HEK293 (cell line): ENCODE measurements at regions of chr6 and their contacts with region 1.

Region 1: GRCh38 chr6:37324131-37325033 is 29.4 kb upstream of the RNF8 start:
- H3K4me3 ChIP-seq: no peak overlapping the region
- H3K27ac ChIP-seq: no peak overlapping the region
- H3K4me1 ChIP-seq: peaks cover 3% of the 10 kb centered on the region; the same call in 1 of the 2 replicates
- CTCF ChIP-seq: no peak

Region 2: DNA sequence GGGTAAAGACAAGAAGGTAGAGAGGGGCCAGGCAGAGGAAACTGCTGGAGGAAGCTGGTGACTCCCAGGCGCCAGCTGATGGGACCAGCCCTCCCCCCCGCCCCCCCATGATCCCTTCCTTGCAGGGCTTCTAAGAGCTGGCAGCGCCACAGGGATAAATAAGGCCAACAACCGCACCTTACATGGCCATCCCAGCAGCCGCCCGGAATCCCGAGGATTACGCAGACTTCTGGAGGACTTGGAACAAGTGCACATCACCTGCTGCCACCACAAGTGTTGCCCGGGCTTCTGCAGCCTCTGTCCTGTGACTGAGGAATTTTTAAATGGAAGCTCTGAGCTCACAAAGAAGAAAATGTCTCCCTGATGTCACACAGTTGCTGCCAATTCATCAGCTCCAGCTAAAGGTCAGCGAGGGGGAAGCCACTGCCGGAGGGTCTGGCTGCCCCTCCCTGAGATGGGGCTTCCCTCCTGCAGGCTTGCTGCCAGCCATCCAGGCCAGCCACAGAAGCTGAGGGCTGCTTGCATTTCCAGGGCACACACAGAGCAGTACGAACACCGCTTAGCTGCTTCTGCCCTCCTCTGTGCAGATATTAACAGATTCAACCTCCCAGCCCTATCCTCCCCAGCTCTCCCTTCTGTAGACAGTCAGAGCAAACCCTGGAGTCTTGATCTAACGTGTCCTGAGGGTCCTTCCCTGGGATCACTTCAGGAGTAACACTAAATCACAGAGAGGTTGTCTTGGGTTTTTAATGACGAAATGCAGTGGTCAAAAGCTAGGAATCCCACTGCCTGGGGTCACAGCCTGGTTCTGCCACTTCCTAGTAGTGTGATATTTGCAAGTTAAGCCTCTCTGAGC is 193.1 kb before region 1 on chr6:
- CTCF ChIA-PET with region 1: no interaction called
- POLR2A ChIA-PET with region 1: no interaction called
- H3K4me3 ChIP-seq: no peak overlapping the region
- H3K27ac ChIP-seq: no peak overlapping the region; the same call in 1 of the 2 replicates
- H3K4me1 ChIP-seq: peaks cover 17% of the 10 kb centered on the region
- CTCF ChIP-seq: no peak

Region 3: GRCh38 chr6:37351027-37351426 is 26.6 kb after region 1 on chr6:
- CTCF ChIA-PET with region 1: interaction called, 16 read pairs
- POLR2A ChIA-PET with region 1: no interaction called
- H3K4me3 ChIP-seq: no peak overlapping the region
- H3K27ac ChIP-seq: no peak overlapping the region
- H3K4me1 ChIP-seq: peaks cover 9% of the 10 kb centered on the region
- CTCF ChIP-seq: no peak

Region 4: GRCh38 chr6:37365762-37366161 is 41.4 kb after region 1 on chr6:
- CTCF ChIA-PET with region 1: interaction called, 11 read pairs
- POLR2A ChIA-PET with region 1: no interaction called
- H3K4me3 ChIP-seq: no peak overlapping the region
- H3K27ac ChIP-seq: no peak overlapping the region
- H3K4me1 ChIP-seq: peaks cover 12% of the 10 kb centered on the region
- CTCF ChIP-seq: peak; percentile 60; the same call in 1 of the 2 replicates

Region 5: GRCh38 chr6:37371154-37372083 is 47.0 kb after region 1 on chr6:
- CTCF ChIA-PET with region 1: interaction called, 13 read pairs
- POLR2A ChIA-PET with region 1: no interaction called
- H3K4me3 ChIP-seq: no peak overlapping the region
- H3K27ac ChIP-seq: no peak overlapping the region
- H3K4me1 ChIP-seq: no peaks in the 10 kb centered on the region
- CTCF ChIP-seq: no peak

Region 6: DNA sequence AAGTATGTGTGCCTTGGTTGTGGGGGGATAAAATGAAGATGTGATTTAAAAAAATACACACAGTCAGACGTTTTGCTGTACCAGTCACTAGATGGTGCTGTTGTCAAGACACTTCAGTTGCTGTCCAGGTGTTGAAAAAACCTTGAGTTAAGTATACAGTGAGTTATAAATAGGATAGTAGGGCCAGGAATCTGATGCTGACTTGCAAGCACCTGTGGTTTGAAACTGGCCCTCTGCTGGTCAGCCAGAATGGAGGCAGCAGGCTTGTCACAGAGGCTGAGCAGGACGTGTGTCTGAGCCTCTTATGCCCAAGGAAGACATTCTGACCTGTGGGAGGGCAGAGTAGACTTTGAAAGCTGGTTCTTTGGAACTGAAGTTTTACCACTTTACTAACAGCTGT is 57.2 kb after region 1 on chr6:
- CTCF ChIA-PET with region 1: interaction called, 13 read pairs
- POLR2A ChIA-PET with region 1: no interaction called
- H3K4me3 ChIP-seq: no peak overlapping the region
- H3K27ac ChIP-seq: no peak overlapping the region
- H3K4me1 ChIP-seq: no peaks in the 10 kb centered on the region
- CTCF ChIP-seq: peak; percentile 40; the same call in 1 of the 2 replicates

Region 7: GRCh38 chr6:37483917-37484785 is 159.8 kb after region 1 on chr6:
- CTCF ChIA-PET with region 1: interaction called, 10 read pairs
- POLR2A ChIA-PET with region 1: no interaction called
- H3K4me3 ChIP-seq: no peak overlapping the region
- H3K27ac ChIP-seq: no peak overlapping the region
- H3K4me1 ChIP-seq: no peaks in the 10 kb centered on the region; the same call in 1 of the 2 replicates
- CTCF ChIP-seq: peak; percentile 89

Region 8: DNA sequence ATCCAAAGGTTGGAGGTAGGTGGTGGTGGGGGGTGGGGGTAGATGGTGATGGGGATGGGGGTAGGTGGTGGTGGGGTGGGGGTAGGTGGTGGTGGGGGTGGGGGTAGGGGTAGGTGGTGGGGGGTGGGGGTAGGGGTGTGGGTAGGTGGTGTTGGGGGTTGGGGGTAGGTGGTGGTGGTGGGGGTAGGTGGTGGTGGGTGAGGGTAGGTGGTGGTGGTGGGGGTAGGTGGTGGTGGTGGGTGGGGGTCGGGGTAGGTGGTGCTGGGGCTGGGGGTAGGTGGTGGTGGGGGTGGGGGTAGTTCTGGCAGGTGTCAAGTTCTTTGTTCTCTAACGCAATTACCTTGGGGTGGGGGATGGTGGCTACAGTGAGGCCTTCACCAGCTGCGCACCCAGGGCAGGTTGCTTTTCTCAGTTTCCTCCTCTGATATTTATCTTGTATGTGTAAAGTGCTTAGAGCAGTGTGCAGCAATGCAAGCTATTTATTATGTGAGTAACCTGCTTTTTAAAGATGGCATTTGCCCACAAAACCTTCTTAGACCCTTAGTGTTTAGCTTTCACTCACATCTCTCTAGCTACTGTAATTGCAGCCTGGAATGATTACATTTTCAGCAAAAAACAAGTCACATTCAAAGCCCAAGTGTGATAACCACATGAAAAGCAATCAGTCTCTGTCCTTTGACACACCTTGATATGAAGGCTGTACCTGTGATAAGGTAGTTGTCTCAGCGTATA is 183.5 kb after region 1 on chr6:
- CTCF ChIA-PET with region 1: no interaction called
- POLR2A ChIA-PET with region 1: no interaction called
- H3K4me3 ChIP-seq: no peak overlapping the region
- H3K27ac ChIP-seq: no peak overlapping the region
- H3K4me1 ChIP-seq: no peaks in the 10 kb centered on the region
- CTCF ChIP-seq: no peak

Region 9: GRCh38 chr6:37819177-37819823 is 494.9 kb after region 1 on chr6 and contains the start of gene ZFAND3:
- CTCF ChIA-PET with region 1: no interaction called
- POLR2A ChIA-PET with region 1: no interaction called
- H3K4me3 ChIP-seq: peak within 1 kb of the TSS; percentile 89
- H3K27ac ChIP-seq: peak within 1 kb of the TSS; percentile 95
- H3K4me1 ChIP-seq: peaks cover 23% of the 10 kb centered on the region
- CTCF ChIP-seq: peak; percentile 40; the same call in 1 of the 2 replicates